ENCODE measurements at regions of chr4 and their contacts with region 1.

Region 1: GRCh38 chr4:110005461-110006056 is 92.9 kb downstream of the EGF start:
- DNase-seq: peak in 2 of 9 experiments; percentile 68 to 78
- ATAC-seq: peak; percentile 54
- H3K4me3 ChIP-seq: no peak overlapping the region
- H3K4me3 Mint-ChIP-seq: no peak overlapping the region
- H3K27ac ChIP-seq: no peak overlapping the region
- H3K27ac Mint-ChIP-seq: no peak overlapping the region
- H3K4me1 ChIP-seq: no peaks in the 10 kb centered on the region
- H3K4me1 Mint-ChIP-seq: no peaks in the 10 kb centered on the region
- H3K27me3 ChIP-seq: peaks cover 0 to 2% of the 10 kb centered on the region in 2 experiments
- H3K27me3 Mint-ChIP-seq: peaks cover 4% of the 10 kb centered on the region
- CTCF ChIP-seq: peak; percentile 92

Region 2: DNA sequence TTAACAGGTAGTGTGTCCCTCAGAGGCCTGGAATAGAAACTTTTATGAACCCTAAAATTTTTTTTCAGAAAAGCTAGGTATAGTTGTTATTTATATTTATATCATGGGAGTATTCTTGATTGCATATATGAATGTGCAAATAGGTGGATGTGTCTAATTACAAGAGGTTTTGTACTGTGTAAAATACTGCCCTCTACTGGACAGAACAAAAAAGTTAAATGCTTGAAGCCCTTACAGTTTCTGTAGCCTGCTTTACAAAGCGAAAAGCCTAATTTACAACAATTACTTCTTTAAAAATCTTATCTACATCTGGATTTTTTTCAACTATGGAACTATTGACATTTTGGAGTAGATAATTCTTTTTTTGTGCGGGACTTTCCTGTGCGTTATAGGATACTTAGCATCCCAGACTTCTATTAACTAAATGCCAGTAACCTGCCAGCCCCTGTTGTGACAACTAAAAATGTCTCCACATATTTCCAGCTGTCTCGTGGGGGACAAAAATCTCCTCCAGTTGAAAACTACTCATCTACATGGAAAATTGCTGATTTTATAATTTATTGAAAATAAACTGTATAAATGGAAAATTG is 505.5 kb after region 1 on chr4:
- CTCF ChIA-PET with region 1: interaction called, 224 read pairs
- POLR2A ChIA-PET with region 1: no interaction called
- intact Hi-C with region 1: loop called (anchors 1 kb)
- DNase-seq: peak in 2 of 9 experiments; percentile 58 to 70
- ATAC-seq: peak; percentile 51
- H3K4me3 ChIP-seq: no peak overlapping the region
- H3K4me3 Mint-ChIP-seq: no peak overlapping the region
- H3K27ac ChIP-seq: no peak overlapping the region
- H3K27ac Mint-ChIP-seq: no peak overlapping the region
- H3K4me1 ChIP-seq: peaks cover 10% of the 10 kb centered on the region
- H3K4me1 Mint-ChIP-seq: peaks cover 10% of the 10 kb centered on the region
- H3K27me3 ChIP-seq: no peaks in the 10 kb centered on the region
- H3K27me3 Mint-ChIP-seq: peaks cover 2% of the 10 kb centered on the region
- CTCF ChIP-seq: peak; percentile 86

Region 3: DNA sequence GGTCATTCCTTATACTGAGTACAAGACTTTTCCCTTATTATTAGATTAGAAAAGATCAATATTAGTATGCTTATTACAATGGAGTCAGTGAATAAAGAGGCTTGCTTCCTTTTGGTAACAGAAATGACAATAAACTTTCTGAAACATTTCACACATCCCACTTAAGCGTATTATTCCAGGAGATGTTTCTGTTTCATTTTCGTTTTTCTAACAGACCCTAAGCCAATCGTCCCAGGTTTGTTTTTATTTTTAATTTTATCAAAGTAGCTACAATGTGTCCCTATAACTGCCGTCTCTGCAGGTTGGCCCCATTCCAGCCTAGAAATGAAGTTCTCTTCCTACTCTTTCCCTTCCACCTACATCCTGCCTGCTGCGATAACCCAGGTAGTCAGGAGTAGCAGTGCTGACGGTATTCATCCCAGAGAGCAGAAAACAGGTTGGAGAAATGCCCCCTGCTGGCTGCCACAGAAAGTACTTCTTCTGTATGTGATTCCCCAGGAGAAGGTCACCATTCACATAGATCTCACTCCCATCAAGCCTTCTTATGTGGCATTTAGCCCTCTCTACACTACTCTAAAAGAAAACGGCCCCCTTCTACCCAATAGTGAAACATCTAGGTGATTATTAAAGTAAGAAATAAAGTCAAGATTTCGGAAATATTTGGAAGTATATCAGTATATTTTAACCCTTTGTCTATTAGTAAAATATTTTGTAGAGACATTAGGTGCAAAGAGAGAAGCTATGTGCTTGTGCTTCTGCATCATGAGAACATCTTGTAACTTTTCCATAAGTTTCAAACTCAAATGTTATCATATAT is 510.8 kb after region 1 on chr4:
- CTCF ChIA-PET with region 1: interaction called, 224 read pairs
- POLR2A ChIA-PET with region 1: no interaction called
- intact Hi-C with region 1: loop called (anchors 1 kb)
- DNase-seq: peak; percentile 44 to 87 (median 76)
- ATAC-seq: peak; percentile 92
- H3K4me3 ChIP-seq: peak overlapping the region; percentile 66 to 75
- H3K4me3 Mint-ChIP-seq: peak overlapping the region; percentile 92
- H3K27ac ChIP-seq: peak overlapping the region; percentile 13 to 73
- H3K27ac Mint-ChIP-seq: peak overlapping the region; percentile 62
- H3K4me1 ChIP-seq: peaks cover 10% of the 10 kb centered on the region
- H3K4me1 Mint-ChIP-seq: peaks cover 14% of the 10 kb centered on the region
- H3K27me3 ChIP-seq: no peaks in the 10 kb centered on the region
- H3K27me3 Mint-ChIP-seq: peaks cover 14% of the 10 kb centered on the region
- CTCF ChIP-seq: peak; percentile 90

Region 4: GRCh38 chr4:111187103-111187502 is 1181.5 kb after region 1 on chr4:
- CTCF ChIA-PET with region 1: no interaction called
- POLR2A ChIA-PET with region 1: no interaction called
- intact Hi-C with region 1: no loop called
- DNase-seq: no peak
- ATAC-seq: no peak
- H3K4me3 ChIP-seq: no peak overlapping the region
- H3K4me3 Mint-ChIP-seq: no peak overlapping the region
- H3K27ac ChIP-seq: no peak overlapping the region
- H3K27ac Mint-ChIP-seq: no peak overlapping the region
- H3K4me1 ChIP-seq: no peaks in the 10 kb centered on the region
- H3K4me1 Mint-ChIP-seq: no peaks in the 10 kb centered on the region
- H3K27me3 ChIP-seq: no peaks in the 10 kb centered on the region
- H3K27me3 Mint-ChIP-seq: no peaks in the 10 kb centered on the region
- CTCF ChIP-seq: no peak